Activated CD8-positive, alpha-beta memory T cell treated with anti-CD3 and anti-CD28 coated beads, Interleukin-2, amount 10 ng/mL, durations not matched to agents 7 days and 5 days (primary cell): ENCODE measurements at regions of chr11 and their contacts with region 1.

Region 1: DNA sequence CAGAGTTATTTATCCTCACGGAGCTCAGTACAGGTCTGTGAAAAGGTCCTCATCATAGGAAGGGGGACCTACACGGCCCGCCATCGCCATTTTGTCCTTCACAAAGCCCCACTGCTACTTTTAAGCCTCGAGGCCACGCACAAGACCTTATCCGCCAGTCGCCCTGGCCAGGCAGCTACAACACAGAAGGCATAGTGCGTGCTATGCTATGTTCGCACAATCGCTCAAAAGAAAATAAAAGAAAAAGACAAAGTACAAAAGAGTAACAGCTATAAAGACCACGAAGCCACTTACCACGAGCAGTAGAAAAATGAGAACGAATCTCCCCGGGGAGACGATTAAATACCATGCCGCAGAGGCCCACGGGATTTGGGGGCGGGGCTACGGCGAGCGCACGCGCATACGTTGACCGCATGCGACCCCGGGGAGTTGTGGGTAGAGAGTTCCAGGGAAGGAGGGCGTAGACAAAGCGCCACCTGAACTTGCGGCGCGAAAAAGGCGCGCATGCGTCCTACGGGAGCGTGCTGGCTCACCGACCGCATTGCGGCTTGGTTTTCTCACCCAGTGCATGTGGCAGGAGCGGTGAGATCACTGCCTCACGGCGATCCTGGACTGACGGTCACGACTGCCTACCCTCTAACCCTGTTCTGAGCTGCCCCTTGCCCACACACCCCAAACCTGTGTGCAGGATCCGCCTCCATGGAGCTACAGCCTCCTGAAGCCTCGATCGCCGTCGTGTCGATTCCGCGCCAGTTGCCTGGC is 16.4 kb upstream of the WDR74 start:
- DNase-seq: peak; percentile 99
- ATAC-seq: peak; percentile 86
- H3K4me3 Mint-ChIP-seq: peak overlapping the region; percentile 93
- H3K27ac Mint-ChIP-seq: peak overlapping the region; percentile 91
- H3K4me1 Mint-ChIP-seq: peaks cover 68% of the 10 kb centered on the region
- H3K27me3 Mint-ChIP-seq: peaks cover 3% of the 10 kb centered on the region

Region 2: DNA sequence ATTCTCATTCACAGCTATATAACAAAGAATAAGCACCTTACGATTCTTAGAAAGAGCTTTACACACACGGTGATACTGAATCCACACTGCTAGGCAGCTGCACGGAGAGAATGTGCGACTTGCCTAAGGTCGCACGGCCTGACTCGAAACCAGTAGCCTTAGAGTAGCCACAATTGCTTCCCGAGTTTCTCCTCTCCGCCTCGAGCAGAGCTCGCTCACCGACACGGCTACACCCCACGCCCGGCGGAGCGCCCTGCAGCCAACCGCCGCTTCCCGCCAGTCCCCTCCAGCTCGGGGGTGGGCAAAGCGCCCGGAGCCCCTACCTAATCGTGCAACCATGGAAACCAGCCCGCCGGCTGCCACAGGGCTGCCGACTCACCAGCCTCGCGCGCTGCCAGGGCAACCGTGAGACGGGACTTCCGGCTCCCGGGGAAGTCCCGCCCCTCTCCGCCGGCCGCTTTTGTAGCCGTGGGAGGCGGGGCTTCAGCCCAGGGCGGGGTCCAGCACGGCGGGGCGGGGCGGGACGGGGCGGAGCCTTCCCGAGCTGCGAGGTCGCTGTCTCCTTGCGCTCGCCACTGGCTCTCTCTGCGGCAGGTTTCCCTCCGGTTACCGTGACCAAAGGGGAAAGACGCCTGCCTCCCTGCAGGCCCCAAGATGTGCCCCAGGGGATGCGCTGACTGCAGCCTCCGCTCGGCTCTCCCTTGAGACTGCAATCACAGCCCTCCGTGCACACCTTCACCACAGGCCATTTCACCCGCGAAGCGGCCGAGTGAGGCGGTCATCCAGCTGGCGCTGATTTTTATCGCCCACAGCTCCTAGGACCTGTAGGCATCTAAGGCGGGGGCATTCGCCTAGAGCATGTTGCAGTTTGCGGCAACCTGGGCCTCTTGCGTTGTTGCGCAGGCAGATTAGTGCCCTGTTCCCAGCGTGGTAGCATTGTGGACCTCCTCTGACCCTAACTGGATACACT is 149.6 kb before region 1 on chr11:
- CTCF ChIA-PET with region 1: no interaction called
- DNase-seq: peak; percentile 96
- ATAC-seq: peak; percentile 76
- H3K4me3 Mint-ChIP-seq: peak overlapping the region; percentile 88
- H3K27ac Mint-ChIP-seq: peak overlapping the region; percentile 74
- H3K4me1 Mint-ChIP-seq: peaks cover 51% of the 10 kb centered on the region
- H3K27me3 Mint-ChIP-seq: no peaks in the 10 kb centered on the region

Region 3: DNA sequence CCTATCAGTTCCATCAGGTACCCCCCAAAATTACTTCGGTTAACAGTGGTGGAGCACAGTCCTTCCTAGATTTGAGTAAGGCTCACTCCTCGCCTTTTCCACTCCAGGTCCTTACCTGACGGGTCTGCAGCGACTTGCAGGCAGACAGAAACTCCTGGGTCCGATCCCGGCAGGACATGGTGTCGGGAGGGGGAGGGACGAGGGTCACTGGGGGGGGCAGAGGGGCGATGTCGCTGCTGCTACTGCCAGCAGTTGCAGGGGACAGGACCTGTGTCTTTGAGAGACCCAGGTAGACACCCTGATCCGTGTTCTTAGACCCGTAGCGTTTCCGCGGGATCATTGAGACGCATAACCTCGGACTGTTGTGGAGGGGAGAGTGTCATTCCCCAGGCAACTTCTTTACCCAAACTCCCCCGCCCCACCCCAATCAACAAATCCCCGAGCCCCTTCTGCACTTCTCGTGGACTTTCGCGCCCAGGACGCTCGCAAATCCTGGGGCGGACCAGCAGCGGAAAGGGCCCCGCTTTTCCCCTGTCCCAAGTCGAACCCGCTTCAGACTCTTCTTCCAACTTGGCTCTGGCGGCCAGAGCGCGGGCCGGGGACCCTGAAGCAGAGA is 24.7 kb before region 1 on chr11:
- CTCF ChIA-PET with region 1: no interaction called
- DNase-seq: no peak
- ATAC-seq: no peak
- H3K4me3 Mint-ChIP-seq: peak overlapping the region; percentile 86
- H3K27ac Mint-ChIP-seq: peak overlapping the region; percentile 98
- H3K4me1 Mint-ChIP-seq: peaks cover 30% of the 10 kb centered on the region
- H3K27me3 Mint-ChIP-seq: no peaks in the 10 kb centered on the region

Region 4: DNA sequence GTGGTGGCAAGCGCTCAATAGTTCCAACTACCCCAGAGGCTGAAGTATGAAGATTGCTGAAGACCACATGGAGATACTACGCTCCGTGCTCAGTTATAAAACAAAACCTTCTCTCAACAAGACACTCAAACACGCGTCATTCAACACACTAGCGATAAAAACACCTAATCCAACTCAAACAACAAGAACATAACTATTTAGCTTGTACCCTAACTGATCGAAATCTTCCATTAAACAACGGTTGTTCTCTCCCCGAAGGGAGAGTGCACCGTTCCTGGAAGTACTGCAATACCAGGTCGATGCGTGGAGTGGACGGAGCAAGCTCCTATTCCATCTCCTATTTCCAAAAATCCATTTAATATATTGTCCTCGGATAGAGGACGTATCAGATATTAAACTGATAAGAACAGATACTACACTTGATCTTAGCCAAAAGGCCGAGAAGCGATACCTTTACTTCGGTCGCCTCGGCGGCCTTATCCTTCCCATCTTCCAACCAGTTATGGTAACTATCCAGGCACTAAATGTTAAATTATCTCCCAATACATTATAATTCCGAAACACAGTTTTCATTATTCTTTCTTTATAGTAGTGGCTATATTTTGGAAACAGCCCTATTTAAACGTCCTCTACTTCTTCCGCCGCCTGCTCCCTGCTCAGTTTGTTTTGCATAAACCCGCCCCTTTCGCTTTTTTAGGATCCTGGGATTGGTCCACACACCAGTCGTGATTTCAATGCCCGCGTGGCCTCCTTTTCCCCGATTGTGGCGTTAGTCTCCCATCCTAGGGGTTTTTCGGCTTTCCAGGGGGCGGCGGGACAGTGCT is 14.2 kb before region 1 on chr11:
- CTCF ChIA-PET with region 1: interaction called, 17 read pairs
- DNase-seq: peak; percentile 91
- ATAC-seq: peak; percentile 70
- H3K4me3 Mint-ChIP-seq: no peak overlapping the region
- H3K27ac Mint-ChIP-seq: no peak overlapping the region
- H3K4me1 Mint-ChIP-seq: peaks cover 21% of the 10 kb centered on the region
- H3K27me3 Mint-ChIP-seq: no peaks in the 10 kb centered on the region

Region 5: GRCh38 chr11:62880803-62881578 is 25.2 kb after region 1 on chr11 and contains the start of gene SLC3A2:
- CTCF ChIA-PET with region 1: interaction called, 28 read pairs
- DNase-seq: peak; percentile 94
- ATAC-seq: peak; percentile 85
- H3K4me3 Mint-ChIP-seq: peak within 1 kb of the TSS; percentile 96
- H3K27ac Mint-ChIP-seq: peak within 1 kb of the TSS; percentile 100
- H3K4me1 Mint-ChIP-seq: peaks cover 45% of the 10 kb centered on the region
- H3K27me3 Mint-ChIP-seq: no peaks in the 10 kb centered on the region
- total RNA-seq, gene SLC3A2: 213 to 259 TPM